PC-9 (cell line): ENCODE measurements at regions of chr1 and their contacts with region 1.

Region 1: GRCh38 chr1:226332947-226333346 is 24.0 kb upstream of the LIN9 start:
- DNase-seq: peak in 1 of 2 experiments; percentile 29
- H3K4me3 ChIP-seq: peak overlapping the region; percentile 49
- H3K27ac ChIP-seq: no peak overlapping the region
- H3K4me1 ChIP-seq: peaks cover 12% of the 10 kb centered on the region
- H3K27me3 ChIP-seq: no peaks in the 10 kb centered on the region
- CTCF ChIP-seq: no peak

Region 2: GRCh38 chr1:225999227-225999911 is 333.6 kb before region 1 on chr1 and contains the start of gene SDE2:
- CTCF ChIA-PET with region 1: no interaction called
- POLR2A ChIA-PET with region 1: no interaction called
- intact Hi-C with region 1: loop called (anchors 10 kb)
- DNase-seq: peak; percentile 92 to 100
- H3K4me3 ChIP-seq: peak within 1 kb of the TSS; percentile 79
- H3K27ac ChIP-seq: peak within 1 kb of the TSS; percentile 67
- H3K4me1 ChIP-seq: peaks cover 27% of the 10 kb centered on the region
- H3K27me3 ChIP-seq: no peaks in the 10 kb centered on the region
- CTCF ChIP-seq: no peak
- total RNA-seq, gene SDE2: 16.0 and 17.3 TPM in 2 replicates

Region 3: DNA sequence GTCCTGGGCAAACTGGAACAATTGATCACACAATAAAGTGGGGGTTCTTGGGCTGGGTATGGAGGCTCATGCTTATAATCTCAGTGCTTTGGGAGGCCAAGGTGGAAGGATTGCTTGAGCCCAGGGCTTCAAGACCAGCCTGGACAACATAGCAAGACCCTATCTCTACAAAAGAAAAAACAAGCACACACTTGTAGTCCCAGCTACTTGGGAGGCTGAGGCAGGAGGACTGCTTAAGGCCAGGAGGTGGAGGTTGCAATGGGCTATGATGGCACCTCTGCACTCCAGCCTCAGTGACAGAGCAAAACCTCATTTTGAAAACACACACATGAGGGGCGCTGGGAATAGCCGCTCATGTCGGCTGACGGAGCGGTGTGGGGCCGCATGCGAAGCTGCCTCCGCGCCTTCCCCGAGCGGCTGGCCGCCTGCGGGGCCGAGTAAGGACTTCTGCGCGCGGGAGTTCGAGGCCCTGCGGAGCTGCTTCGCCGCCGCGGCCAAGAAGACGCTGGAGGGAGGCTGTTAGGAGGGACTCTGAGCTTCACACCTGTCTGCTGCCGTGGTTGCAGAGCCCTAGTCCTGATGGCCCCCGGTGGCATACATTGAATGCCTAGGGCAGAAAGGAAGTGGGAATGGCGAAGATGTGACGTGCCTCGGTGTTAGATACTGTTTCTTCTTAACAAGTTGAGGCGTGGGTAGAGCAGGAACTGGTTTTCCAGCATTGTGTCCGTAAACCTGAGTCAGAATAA is 205.9 kb before region 1 on chr1:
- CTCF ChIA-PET with region 1: interaction called, 15 read pairs
- POLR2A ChIA-PET with region 1: interaction called, 15 read pairs
- intact Hi-C with region 1: loop called (anchors 1 kb)
- DNase-seq: peak; percentile 47 to 49
- H3K4me3 ChIP-seq: no peak overlapping the region
- H3K27ac ChIP-seq: no peak overlapping the region
- H3K4me1 ChIP-seq: peaks cover 46% of the 10 kb centered on the region
- H3K27me3 ChIP-seq: no peaks in the 10 kb centered on the region
- CTCF ChIP-seq: no peak

Region 4: GRCh38 chr1:226186124-226187018 is 146.6 kb before region 1 on chr1 and contains the start of gene ACBD3:
- CTCF ChIA-PET with region 1: no interaction called
- POLR2A ChIA-PET with region 1: no interaction called
- intact Hi-C with region 1: loop called (anchors 2 kb)
- DNase-seq: peak; percentile 76 to 82
- H3K4me3 ChIP-seq: peak within 1 kb of the TSS; percentile 98
- H3K27ac ChIP-seq: peak within 1 kb of the TSS; percentile 61
- H3K4me1 ChIP-seq: peaks cover 21% of the 10 kb centered on the region
- H3K27me3 ChIP-seq: no peaks in the 10 kb centered on the region
- CTCF ChIP-seq: no peak; the same call in 1 of the 2 replicates
- total RNA-seq, gene ACBD3: 39.3 and 46.4 TPM in 2 replicates

Region 5: GRCh38 chr1:226201029-226201593 is 131.8 kb before region 1 on chr1:
- CTCF ChIA-PET with region 1: interaction called, 3 read pairs
- POLR2A ChIA-PET with region 1: interaction called, 8 read pairs
- intact Hi-C with region 1: loop called (anchors 5 kb)
- DNase-seq: no peak
- H3K4me3 ChIP-seq: no peak overlapping the region
- H3K27ac ChIP-seq: no peak overlapping the region
- H3K4me1 ChIP-seq: peaks cover 20% of the 10 kb centered on the region
- H3K27me3 ChIP-seq: no peaks in the 10 kb centered on the region
- CTCF ChIP-seq: no peak; the same call in 1 of the 2 replicates

Region 6: GRCh38 chr1:226308723-226309315 is 24.1 kb before region 1 on chr1 and contains the start of gene LIN9:
- CTCF ChIA-PET with region 1: interaction called, 7 read pairs
- POLR2A ChIA-PET with region 1: no interaction called
- intact Hi-C with region 1: loop called (anchors 2 kb)
- DNase-seq: peak; percentile 75 to 94
- H3K4me3 ChIP-seq: peak within 1 kb of the TSS; percentile 99
- H3K27ac ChIP-seq: peak within 1 kb of the TSS; percentile 40; the same call in 1 of the 2 replicates
- H3K4me1 ChIP-seq: peaks cover 24% of the 10 kb centered on the region
- H3K27me3 ChIP-seq: no peaks in the 10 kb centered on the region
- CTCF ChIP-seq: peak; percentile 24; the same call in 1 of the 2 replicates
- total RNA-seq, gene LIN9: 10.0 and 12.1 TPM in 2 replicates